Dendritic cell treated with granulocyte-macrophage colony-stimulating factor and Interleukin-4, amounts not matched to agents 40 ng/mL and 50 ng/mL, for 4 days (primary cell): ENCODE measurements at regions of chr14 and their contacts with region 1.

Region 1: DNA sequence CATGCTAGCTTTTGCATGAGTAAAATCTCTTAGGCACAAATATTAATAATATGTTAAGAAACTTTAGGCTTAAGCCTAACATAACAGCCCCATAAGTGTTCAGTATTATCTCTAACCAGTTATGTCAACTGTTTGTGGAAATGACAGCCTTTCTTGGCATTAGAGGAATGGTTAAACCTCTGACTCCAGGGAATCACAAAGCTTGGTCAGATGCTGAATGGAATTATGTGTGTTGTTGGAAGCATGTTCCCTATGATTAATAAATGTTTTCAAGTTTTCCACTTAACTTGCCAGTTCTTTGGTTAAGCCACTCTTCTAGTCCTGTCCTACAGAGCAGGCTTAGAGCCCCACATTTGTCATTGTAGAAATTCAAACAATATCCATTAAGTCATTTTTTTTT is 17.0 kb downstream of the PSEN1 start:
- H3K4me3 Mint-ChIP-seq: no peak overlapping the region
- H3K27ac Mint-ChIP-seq: no peak overlapping the region
- H3K4me1 Mint-ChIP-seq: no peaks in the 10 kb centered on the region
- H3K27me3 Mint-ChIP-seq: no peaks in the 10 kb centered on the region

Region 2: DNA sequence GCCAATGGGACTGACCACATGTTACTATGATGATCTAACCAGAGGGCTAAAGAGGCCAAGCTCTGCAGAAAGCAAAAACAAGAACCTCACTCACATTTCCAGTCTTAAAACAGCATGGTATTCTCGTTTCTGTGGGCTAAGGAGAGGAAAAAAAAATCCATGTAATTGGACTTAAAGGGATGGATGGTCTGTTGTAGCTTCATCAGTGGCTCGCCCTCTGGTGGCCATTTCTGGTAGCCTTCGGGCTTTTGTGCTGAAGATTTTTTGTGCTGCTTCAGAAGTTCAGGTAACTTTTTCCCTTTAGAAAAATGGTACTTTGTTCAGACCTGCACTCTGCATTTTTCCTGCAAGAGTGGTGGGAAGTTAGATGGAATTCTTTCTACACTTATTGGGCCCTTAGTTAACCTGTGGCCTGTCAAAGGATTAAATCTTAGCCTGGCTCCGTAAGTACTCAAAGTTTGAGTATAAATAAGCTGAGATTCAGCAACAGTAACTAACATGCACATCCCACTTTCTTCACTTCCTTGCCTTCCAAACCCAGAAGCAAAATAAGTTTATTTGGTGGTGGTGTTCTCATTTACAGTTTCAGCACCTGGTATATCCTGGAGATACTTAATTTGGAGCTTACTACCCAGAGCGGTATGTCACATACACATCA is 204.7 kb before region 1 on chr14:
- intact Hi-C with region 1: no loop called
- H3K4me3 Mint-ChIP-seq: no peak overlapping the region
- H3K27ac Mint-ChIP-seq: no peak overlapping the region
- H3K4me1 Mint-ChIP-seq: peaks cover 6% of the 10 kb centered on the region
- H3K27me3 Mint-ChIP-seq: no peaks in the 10 kb centered on the region

Region 3: GRCh38 chr14:73105050-73105449 is 48.2 kb before region 1 on chr14:
- intact Hi-C with region 1: loop called (anchors 5 kb)
- H3K4me3 Mint-ChIP-seq: no peak overlapping the region
- H3K27ac Mint-ChIP-seq: no peak overlapping the region
- H3K4me1 Mint-ChIP-seq: no peaks in the 10 kb centered on the region
- H3K27me3 Mint-ChIP-seq: no peaks in the 10 kb centered on the region

Region 4: GRCh38 chr14:73136387-73137225 is 16.7 kb before region 1 on chr14 and contains the start of gene PSEN1:
- intact Hi-C with region 1: no loop called
- H3K4me3 Mint-ChIP-seq: peak within 1 kb of the TSS; percentile 89
- H3K27ac Mint-ChIP-seq: peak within 1 kb of the TSS; percentile 100
- H3K4me1 Mint-ChIP-seq: peaks cover 21% of the 10 kb centered on the region
- H3K27me3 Mint-ChIP-seq: no peaks in the 10 kb centered on the region

Region 5: GRCh38 chr14:73426877-73427276 is 273.6 kb after region 1 on chr14:
- intact Hi-C with region 1: no loop called
- H3K4me3 Mint-ChIP-seq: no peak overlapping the region
- H3K27ac Mint-ChIP-seq: peak overlapping the region; percentile 77
- H3K4me1 Mint-ChIP-seq: peaks cover 50% of the 10 kb centered on the region
- H3K27me3 Mint-ChIP-seq: no peaks in the 10 kb centered on the region